GM12878 (cell line): ENCODE measurements at regions of chrX and their contacts with region 1.

Region 1: GRCh38 chrX:109890895-109891502 is 111.9 kb upstream of the TMEM164 start:
- DNase-seq: no peak
- ATAC-seq: peak; percentile 77
- H3K4me3 ChIP-seq: no peak overlapping the region
- H3K27ac ChIP-seq: no peak overlapping the region
- H3K4me1 ChIP-seq: peaks cover 16% of the 10 kb centered on the region
- H3K27me3 ChIP-seq: no peaks in the 10 kb centered on the region
- CTCF ChIP-seq: peak; percentile 85 to 96 (median 94)
- EP300 ChIP-seq: no peak
- POLR2A ChIP-seq: no peak
- RAD21 ChIP-seq: peak; percentile 81

Region 2: DNA sequence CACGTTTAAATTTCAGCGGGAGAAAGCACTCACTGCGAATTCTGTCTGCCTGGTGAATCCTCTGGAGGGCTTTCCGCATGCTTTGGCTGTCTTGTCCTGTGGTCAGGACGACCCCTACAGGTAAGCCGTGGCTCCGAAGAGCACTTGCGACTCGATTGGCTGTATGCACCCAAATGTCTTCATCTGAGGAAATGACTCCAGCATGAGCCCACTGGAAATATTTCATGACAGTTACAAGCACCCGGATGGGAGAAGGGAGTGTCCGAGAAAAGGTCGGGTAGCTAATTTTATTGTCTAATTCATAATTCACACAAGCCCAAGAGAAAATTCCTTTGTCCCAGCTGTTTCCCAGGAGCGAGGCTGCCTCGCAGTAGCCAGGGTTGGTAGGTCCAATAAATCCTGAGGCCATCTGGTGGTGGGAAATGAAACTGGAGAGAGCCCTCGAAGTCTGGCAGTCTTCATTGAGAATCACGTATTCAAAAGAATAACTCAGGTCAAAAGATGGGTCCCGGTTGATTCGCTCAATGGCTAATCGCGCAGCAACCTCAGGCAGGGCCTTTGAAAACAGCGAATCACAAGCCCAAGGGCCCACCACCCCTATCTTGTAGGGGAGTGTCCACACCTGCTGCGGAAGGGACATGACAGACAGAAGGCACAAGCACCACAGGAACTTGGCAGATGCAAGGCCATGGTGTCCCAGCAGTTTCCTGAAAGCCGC is 415.7 kb before region 1 on chrX:
- CTCF ChIA-PET with region 1: interaction called, 18 read pairs
- POLR2A ChIA-PET with region 1: no interaction called
- RAD21 ChIA-PET with region 1: interaction called, 4 read pairs
- SMC1A ChIA-PET with region 1: interaction called, 6 read pairs
- in situ Hi-C with region 1: no loop called
- intact Hi-C with region 1: no loop called
- DNase-seq: no peak
- ATAC-seq: peak; percentile 61
- H3K4me3 ChIP-seq: no peak overlapping the region
- H3K27ac ChIP-seq: no peak overlapping the region
- H3K4me1 ChIP-seq: no peaks in the 10 kb centered on the region
- H3K27me3 ChIP-seq: no peaks in the 10 kb centered on the region; a peak in 1 of 4 replicates
- CTCF ChIP-seq: peak in 2 of 3 experiments; percentile 13 to 19; a peak in 2 of 6 replicates
- EP300 ChIP-seq: no peak
- POLR2A ChIP-seq: no peak
- RAD21 ChIP-seq: 0 out of 2 replicates have a peak, but pooled peaks have one; percentile 22

Region 3: GRCh38 chrX:109635176-109635575 is 255.8 kb before region 1 on chrX:
- CTCF ChIA-PET with region 1: interaction called, 32 read pairs
- POLR2A ChIA-PET with region 1: interaction called, 3 read pairs
- RAD21 ChIA-PET with region 1: interaction called, 12 read pairs
- SMC1A ChIA-PET with region 1: interaction called, 24 read pairs
- in situ Hi-C with region 1: no loop called
- intact Hi-C with region 1: loop called (anchors 5 kb)
- DNase-seq: no peak
- ATAC-seq: peak; percentile 86
- H3K4me3 ChIP-seq: no peak overlapping the region
- H3K27ac ChIP-seq: no peak overlapping the region
- H3K4me1 ChIP-seq: no peaks in the 10 kb centered on the region
- H3K27me3 ChIP-seq: no peaks in the 10 kb centered on the region
- CTCF ChIP-seq: peak; percentile 44 to 69 (median 50); a peak in 4 of 6 replicates
- EP300 ChIP-seq: no peak
- POLR2A ChIP-seq: no peak
- RAD21 ChIP-seq: peak; percentile 26

Region 4: DNA sequence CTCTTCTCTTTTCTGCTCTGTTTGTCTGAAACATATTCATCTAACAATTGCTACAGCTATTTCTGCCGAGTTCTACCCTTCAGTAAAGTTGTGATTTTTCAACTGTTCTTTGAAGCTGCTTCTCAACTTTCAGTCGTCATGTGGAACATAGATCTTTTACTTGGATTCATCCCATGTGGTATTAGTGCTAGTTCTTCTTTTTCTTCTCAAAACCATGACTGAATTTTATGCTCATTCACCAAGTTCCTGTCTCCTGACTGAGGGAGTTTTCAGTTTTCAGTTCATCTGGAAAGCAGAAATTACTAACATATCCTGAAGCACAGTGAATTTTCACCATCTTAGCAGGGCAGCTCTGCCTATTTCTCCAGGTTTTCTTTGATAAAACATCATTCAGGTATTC is 170.1 kb before region 1 on chrX:
- CTCF ChIA-PET with region 1: interaction called, 202 read pairs
- POLR2A ChIA-PET with region 1: no interaction called
- RAD21 ChIA-PET with region 1: interaction called, 24 read pairs
- SMC1A ChIA-PET with region 1: interaction called, 137 read pairs
- in situ Hi-C with region 1: no loop called
- intact Hi-C with region 1: no loop called
- DNase-seq: no peak
- ATAC-seq: peak; percentile 31
- H3K4me3 ChIP-seq: no peak overlapping the region
- H3K27ac ChIP-seq: no peak overlapping the region; the same call in 1 of the 2 replicates
- H3K4me1 ChIP-seq: peaks cover 10% of the 10 kb centered on the region
- H3K27me3 ChIP-seq: no peaks in the 10 kb centered on the region
- CTCF ChIP-seq: no peak
- EP300 ChIP-seq: no peak
- POLR2A ChIP-seq: no peak
- RAD21 ChIP-seq: no peak

Region 5: GRCh38 chrX:109911046-109911445 is 20.0 kb after region 1 on chrX:
- CTCF ChIA-PET with region 1: interaction called, 16 read pairs
- POLR2A ChIA-PET with region 1: no interaction called
- RAD21 ChIA-PET with region 1: interaction called, 8 read pairs
- SMC1A ChIA-PET with region 1: interaction called, 9 read pairs
- in situ Hi-C with region 1: no loop called
- intact Hi-C with region 1: no loop called
- DNase-seq: no peak
- ATAC-seq: no peak
- H3K4me3 ChIP-seq: no peak overlapping the region
- H3K27ac ChIP-seq: no peak overlapping the region
- H3K4me1 ChIP-seq: no peaks in the 10 kb centered on the region
- H3K27me3 ChIP-seq: no peaks in the 10 kb centered on the region
- CTCF ChIP-seq: peak; percentile 26 to 39 (median 37); a peak in 5 of 6 replicates
- EP300 ChIP-seq: no peak
- POLR2A ChIP-seq: no peak
- RAD21 ChIP-seq: peak; percentile 30; the same call in 1 of the 2 replicates

Region 6: DNA sequence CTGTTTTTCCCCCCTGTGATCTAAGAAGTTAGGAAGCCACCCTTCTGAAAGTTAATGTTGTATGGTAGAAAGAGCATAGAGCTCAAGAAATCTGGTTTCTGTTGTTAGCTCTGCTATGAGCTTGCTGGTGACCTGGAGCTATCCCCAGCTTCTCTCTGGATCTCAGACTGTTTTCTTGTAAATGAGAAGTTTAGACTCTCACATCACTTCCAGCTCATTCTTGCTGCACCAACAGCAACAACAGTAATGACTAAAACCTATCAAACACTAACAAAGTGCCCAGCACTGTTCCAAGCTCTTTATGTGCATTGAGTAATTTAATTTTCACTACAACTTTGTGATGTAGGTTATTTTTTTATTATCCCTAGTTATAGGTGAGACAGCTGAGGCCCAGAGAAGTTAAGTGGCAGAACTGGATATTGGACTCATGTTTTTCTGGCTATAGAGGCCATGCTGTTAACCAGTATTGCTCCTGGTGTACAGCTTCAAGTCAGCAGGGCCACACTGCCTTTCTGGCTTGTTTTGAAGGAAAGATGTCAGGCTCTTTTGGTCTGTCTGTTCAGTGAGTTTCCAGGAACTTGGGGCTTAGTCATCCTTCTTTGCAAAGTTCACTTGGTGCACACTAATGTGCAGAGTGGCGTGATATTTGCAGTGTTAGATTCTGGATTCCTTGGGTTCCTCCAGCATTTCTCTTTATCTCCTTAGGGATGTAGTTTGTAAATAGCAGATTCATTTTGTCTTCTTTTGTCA is 84.1 kb after region 1 on chrX:
- CTCF ChIA-PET with region 1: no interaction called
- POLR2A ChIA-PET with region 1: no interaction called
- RAD21 ChIA-PET with region 1: no interaction called
- SMC1A ChIA-PET with region 1: no interaction called
- in situ Hi-C with region 1: no loop called
- intact Hi-C with region 1: no loop called
- DNase-seq: no peak
- ATAC-seq: no peak
- H3K4me3 ChIP-seq: no peak overlapping the region
- H3K27ac ChIP-seq: no peak overlapping the region
- H3K4me1 ChIP-seq: no peaks in the 10 kb centered on the region
- H3K27me3 ChIP-seq: peaks cover 0 to 2% of the 10 kb centered on the region in 2 experiments; a peak in 1 of 4 replicates
- CTCF ChIP-seq: no peak
- EP300 ChIP-seq: no peak
- POLR2A ChIP-seq: no peak
- RAD21 ChIP-seq: no peak